Head of caudate nucleus (tissue), 42 donors: ENCODE measurements at regions of chrX and their contacts with region 1.

Region 1: GRCh38 chrX:153667956-153668396 is 5.6 kb downstream of the PNCK start:
- DNase-seq: peak; percentile 64 to 96 (median 89)

Region 2: GRCh38 chrX:152725409-152725808 is 942.6 kb before region 1 on chrX:
- intact Hi-C with region 1: no loop called
- DNase-seq: no peak

Region 3: GRCh38 chrX:152960115-152960514 is 707.9 kb before region 1 on chrX:
- intact Hi-C with region 1: loop called (anchors 10 kb)
- DNase-seq: no peak

Region 4: DNA sequence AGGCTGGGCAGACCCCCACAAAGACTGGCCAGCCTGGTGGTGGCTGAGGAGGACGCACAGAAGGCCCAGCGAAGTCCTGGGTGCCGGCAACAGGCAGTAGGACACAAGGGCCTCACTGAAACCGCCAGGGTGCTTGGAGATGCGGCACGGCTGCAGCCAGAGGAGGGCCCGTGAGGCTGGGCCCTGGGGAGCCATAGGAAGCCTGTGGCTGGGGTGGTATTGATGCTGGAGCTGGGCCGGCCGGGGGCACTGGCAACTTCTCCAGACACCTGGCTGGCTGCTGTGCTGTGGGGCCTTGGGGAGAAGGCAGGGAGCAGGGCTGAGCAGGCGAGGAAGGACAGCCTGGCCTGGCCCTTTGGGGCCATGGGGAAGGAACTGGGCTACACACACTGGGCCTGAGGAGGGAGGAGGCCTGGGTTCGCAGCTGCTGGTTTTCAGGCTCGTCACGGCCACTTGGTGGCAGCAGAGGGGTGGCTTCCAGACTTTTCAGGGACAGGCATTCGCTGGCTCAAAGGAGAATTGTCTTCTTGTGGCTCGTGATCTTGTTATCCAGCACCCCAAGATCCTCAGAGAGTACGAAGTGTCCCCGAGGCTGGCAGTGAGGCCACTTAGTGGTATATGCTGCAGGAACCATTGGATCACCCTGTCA is 113.3 kb before region 1 on chrX:
- intact Hi-C with region 1: loop called (anchors 5 kb)
- DNase-seq: peak; percentile 75 to 93 (median 88)

Region 5: DNA sequence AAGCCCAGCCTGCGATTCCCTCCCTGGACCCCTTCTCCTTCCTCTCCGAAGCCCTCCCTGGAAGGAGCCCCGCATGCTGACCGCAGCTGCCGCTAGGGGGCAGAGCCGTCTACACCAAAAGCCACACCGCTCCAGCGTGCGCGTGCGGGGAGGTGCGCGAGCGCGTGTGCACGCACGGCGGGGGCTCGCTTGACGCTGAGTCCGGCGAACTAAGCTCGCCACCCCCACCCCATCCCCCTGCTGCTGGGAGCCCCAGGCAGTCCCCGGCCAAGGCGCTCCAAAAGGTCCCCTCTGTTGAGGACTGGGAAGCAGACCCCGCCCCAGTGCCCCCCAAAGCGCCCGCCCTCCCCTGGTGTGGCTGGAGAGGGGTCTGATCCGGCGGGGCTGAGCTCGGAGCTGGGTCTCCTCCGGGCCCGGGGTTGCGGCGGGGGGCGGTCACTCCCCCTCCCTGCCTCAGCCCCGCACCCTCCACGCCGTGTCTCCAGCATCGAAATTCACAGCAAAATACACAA is 58.0 kb before region 1 on chrX:
- intact Hi-C with region 1: loop called (anchors 5 kb)
- DNase-seq: peak; percentile 60 to 91 (median 82)